Right ventricle myocardium inferior (tissue), 1 donor: ENCODE measurements at regions of chr5 and their contacts with region 1.

Region 1: DNA sequence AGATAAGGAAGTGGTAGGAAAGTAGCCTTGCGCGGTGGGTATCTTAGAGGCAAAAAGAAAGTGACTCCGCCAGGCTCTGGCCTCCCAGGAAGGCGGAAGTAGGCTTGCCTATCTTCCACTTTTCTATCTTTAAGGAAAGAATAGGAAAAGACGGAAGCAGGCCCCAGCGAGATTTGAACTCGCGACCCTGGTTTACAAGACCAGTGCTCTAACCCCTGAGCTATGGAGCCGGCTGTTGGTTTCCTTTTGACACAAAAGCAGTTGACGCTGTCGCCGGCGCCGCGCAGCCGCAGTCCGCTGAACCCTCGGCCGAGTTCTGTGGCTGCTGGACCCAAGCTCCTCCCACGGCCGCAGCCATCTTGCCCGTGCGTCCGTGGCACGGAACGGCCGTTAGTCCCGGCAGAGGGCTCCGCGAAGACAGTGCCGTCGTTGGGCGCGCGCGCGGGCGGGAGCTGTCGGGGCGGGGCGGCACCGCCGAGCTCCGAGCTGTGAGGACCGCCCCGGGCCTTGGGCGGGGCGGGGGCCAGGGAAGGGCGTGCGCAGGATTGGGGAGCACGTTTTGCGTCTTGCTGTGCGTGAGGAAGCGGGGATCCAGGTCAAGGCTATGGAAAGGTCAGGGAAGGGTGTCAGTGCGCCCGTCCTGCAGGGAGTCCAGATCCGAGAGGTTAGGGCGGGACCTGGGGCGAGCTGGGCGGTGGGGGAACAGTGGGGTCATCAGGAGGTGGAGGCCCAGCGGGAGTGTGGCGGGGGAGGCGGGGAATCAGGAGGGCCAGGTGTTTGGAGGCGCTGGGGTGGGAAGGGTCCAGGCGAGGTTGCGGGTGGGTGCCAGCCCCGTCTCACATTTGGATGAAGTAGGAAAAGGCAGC is 13.2 kb downstream of the TRIM7 start:
- DNase-seq: peak; percentile 98
- ATAC-seq: peak; percentile 86

Region 2: GRCh38 chr5:180802325-180803180 is 389.2 kb before region 1 on chr5 and contains the start of gene MGAT1:
- intact Hi-C with region 1: loop called (anchors 5 kb)
- DNase-seq: peak; percentile 95
- ATAC-seq: peak; percentile 89
- total RNA-seq, gene MGAT1: 76.0 TPM

Region 3: GRCh38 chr5:181207214-181208107 is 15.7 kb after region 1 on chr5:
- intact Hi-C with region 1: loop called (anchors 1 kb)
- DNase-seq: no peak
- ATAC-seq: peak; percentile 48

Region 4: DNA sequence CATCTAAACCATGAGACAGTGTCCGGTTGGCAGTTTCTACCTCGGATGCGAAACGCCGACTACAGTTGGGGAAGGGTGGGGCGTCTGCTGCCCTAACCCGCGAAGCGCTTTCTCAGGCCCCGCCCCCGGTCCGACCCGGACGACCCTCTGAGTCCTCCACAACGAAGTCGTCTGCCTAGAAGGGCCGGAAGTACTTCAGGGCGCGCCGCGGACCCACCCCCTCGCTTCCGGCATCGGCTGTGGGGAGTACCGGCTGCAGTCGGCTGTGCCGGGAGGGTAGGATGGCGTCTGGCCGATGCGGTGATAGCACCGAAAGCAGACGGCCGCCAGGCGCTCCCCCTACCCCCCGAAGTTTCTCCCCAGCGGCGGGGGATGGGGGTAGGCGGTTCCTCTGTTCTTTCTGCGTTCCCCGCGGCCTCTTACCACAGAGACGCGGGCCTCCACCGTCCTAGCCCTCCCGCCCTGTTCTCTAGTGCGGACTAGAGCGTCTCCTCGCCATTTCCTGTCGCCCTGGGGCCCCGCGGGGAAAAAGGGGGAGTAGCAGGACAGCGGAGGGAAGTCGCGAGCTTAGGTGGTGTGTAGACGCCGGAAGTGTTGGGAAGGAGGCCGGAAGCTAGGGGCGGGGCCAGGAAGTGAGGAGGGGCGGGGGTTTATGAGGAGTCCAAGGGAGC is 31.4 kb after region 1 on chr5 and contains the start of gene TRIM41:
- intact Hi-C with region 1: loop called (anchors 1 kb)
- DNase-seq: peak; percentile 99
- ATAC-seq: peak; percentile 91
- total RNA-seq, gene TRIM41: 20.9 TPM

Region 5: GRCh38 chr5:181233436-181234115 is 41.8 kb after region 1 on chr5:
- intact Hi-C with region 1: no loop called
- DNase-seq: no peak
- ATAC-seq: no peak

Region 6: DNA sequence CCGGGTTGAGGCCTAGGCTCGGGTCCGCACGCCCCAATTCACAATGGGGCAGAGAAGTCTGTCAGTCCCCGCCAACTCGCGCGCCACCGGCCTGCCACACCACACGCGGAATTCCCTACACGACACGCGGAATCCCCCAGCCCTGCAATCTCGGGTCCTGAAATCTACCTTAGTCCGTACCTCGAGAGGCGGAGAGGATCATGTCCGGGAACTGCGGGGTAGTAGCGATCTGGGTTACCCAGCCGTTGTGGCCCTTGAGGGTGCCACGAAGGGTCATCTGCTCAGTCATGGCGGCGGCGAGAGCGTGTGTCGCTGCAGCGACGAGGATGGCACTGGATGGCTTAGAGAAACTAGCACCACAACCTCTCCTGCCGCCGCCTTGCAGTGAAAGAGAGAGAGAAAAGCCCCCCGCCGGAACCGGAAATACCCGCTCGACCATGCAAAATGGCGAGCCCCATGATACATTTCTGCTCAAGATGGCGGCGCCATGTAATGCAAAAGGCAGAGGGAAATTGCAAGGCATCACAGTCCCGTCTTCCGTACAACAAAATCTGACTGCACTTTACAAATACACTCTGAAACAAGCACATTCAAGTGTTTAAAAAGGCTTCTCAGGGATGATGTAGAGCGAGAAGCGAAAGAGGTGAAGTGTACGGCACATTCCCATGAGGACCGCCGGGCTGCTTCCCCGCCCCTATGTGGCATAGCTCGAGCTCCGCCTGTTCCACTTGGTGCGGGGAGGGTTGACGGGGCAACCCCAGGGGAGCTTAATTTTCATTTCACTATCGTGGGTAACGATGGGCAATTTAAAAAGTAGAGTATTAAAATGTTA is 52.0 kb after region 1 on chr5 and contains the start of gene RACK1:
- intact Hi-C with region 1: loop called (anchors 1 kb)
- DNase-seq: peak; percentile 92
- ATAC-seq: peak; percentile 78
- total RNA-seq, gene RACK1: 693 TPM

Region 7: DNA sequence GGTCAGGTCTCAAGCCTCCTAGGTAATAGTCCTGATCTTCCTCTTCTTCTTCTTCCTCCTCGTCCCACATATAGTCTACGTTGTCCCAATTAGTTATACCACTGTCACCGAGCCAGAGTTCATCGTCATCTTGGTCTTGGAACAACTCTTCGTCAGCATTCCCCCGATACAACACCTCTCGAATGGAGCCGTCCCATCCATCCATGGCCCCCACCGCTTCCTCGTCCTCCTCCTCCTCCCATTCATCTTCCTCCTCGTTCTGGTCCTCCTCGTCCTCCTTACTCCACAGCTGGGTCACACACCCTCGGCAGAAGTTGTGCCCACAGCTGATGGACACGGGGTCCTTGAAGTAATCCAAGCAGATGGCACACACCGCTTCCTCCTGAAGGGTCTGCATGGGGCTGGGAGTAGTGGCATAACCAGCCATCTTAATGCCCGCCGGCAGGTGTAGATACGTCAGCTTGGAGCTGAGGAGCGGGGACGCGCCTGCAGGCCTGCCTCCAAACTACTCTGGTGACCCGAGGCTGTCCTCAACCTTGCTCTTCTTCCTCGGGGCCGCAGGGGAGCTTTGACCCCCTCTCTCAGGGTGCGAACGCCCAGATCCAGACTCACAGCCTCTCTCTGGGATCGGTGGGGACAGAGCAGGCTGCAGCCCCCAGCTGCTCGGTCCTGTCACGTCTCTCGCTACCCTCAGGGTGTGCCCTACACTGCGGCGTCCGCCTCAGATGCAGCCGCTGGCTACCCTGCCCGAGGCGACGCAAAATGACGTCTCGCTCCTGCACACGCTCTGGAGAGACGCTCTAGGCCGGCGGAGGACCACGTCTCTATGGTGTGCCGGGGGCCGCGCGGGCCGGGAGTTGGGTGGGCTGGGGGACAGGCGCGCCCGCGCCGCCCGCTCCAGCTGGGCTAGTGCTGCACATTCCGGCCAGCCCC is 68.9 kb after region 1 on chr5 and contains the start of gene TRIM52:
- intact Hi-C with region 1: loop called (anchors 2 kb)
- DNase-seq: peak; percentile 97
- ATAC-seq: peak; percentile 94
- total RNA-seq, gene TRIM52: 9.2 TPM